Aorta (tissue), 5 donors: ENCODE measurements at regions of chr2 and their contacts with region 1.

Region 1: GRCh38 chr2:157830696-157831570 is 45.2 kb downstream of the ACVR1 start:
- DNase-seq: no peak
- ATAC-seq: peak; percentile 88
- H3K4me3 ChIP-seq: no peak overlapping the region
- H3K27ac ChIP-seq: peak overlapping the region; percentile 30 to 83
- H3K4me1 ChIP-seq: peaks cover 3 to 12% of the 10 kb centered on the region in 2 donors
- H3K27me3 ChIP-seq: no peaks in the 10 kb centered on the region

Region 2: DNA sequence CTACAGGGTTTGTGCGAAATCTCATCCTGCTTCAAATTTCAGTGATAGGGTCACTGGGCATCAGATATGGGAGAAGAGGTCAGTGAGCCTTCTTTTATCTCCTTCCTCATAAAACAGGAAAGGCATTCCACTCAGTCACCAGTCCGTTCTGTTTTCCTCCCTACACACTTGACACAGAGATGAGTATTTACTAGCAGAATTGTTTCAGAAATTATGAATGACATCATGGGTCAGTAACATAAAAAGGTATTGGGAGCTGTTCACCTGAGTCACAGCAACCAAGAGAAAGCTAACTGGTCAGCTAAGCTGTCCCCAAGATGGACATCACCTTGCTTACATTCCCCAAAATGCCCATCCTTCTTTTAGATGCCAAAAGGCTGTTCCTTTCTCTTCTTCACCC is 51.1 kb before region 1 on chr2:
- intact Hi-C with region 1: no loop called
- DNase-seq: no peak
- ATAC-seq: no peak
- H3K4me3 ChIP-seq: no peak overlapping the region
- H3K27ac ChIP-seq: no peak overlapping the region
- H3K4me1 ChIP-seq: peaks cover 3 to 4% of the 10 kb centered on the region in 2 donors
- H3K27me3 ChIP-seq: no peaks in the 10 kb centered on the region

Region 3: GRCh38 chr2:157789933-157790511 is 40.9 kb before region 1 on chr2:
- intact Hi-C with region 1: loop called in 1 of 2 experiments (anchors 5 kb)
- DNase-seq: peak; percentile 69 to 79
- ATAC-seq: peak; percentile 75
- H3K4me3 ChIP-seq: no peak overlapping the region
- H3K27ac ChIP-seq: peak overlapping the region in 1 of 2 donors; percentile 87
- H3K4me1 ChIP-seq: peaks cover 16 to 38% of the 10 kb centered on the region in 2 donors
- H3K27me3 ChIP-seq: no peaks in the 10 kb centered on the region